Thyroid gland (tissue), 4 donors: ENCODE measurements at regions of chr7 and their contacts with region 1.

Region 1: GRCh38 chr7:7595451-7595850 is 28.8 kb downstream of the MIOS start:
- DNase-seq: no peak
- H3K4me3 ChIP-seq: no peak overlapping the region
- H3K27ac ChIP-seq: no peak overlapping the region
- H3K4me1 ChIP-seq: no peaks in the 10 kb centered on the region
- H3K27me3 ChIP-seq: no peaks in the 10 kb centered on the region
- CTCF ChIP-seq: peak in 4 of 6 experiments; percentile 28 to 84 (median 59)
- POLR2A ChIP-seq: no peak

Region 2: DNA sequence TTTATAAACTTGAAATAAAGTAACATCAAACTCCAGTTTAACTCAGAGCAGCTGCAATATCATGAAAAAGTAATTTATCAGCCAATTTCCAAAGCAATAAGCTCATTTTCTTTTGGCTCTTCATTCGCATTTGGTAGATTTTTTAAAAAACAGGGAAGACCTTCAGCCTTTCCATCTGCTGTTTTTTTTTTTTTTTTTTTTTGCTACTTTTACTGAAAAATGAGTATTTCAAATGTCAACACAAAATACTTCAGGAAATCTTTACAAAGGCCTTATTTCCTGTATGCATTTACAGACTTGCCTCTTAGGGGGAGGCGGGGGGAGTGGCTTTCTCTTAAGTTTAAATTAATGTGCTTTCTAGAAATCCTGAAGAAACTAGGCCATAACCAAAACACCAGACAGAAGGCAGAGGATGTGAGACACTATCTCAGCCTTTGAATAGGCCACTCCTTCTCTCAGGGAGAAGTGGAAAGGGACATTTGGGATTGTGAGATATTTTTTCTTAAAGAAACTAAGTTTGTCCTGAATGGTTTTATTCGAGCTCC is 151.6 kb before region 1 on chr7:
- intact Hi-C with region 1: no loop called
- DNase-seq: no peak
- H3K4me3 ChIP-seq: no peak overlapping the region
- H3K27ac ChIP-seq: no peak overlapping the region
- H3K4me1 ChIP-seq: no peaks in the 10 kb centered on the region
- H3K27me3 ChIP-seq: no peaks in the 10 kb centered on the region
- CTCF ChIP-seq: no peak
- POLR2A ChIP-seq: no peak

Region 3: DNA sequence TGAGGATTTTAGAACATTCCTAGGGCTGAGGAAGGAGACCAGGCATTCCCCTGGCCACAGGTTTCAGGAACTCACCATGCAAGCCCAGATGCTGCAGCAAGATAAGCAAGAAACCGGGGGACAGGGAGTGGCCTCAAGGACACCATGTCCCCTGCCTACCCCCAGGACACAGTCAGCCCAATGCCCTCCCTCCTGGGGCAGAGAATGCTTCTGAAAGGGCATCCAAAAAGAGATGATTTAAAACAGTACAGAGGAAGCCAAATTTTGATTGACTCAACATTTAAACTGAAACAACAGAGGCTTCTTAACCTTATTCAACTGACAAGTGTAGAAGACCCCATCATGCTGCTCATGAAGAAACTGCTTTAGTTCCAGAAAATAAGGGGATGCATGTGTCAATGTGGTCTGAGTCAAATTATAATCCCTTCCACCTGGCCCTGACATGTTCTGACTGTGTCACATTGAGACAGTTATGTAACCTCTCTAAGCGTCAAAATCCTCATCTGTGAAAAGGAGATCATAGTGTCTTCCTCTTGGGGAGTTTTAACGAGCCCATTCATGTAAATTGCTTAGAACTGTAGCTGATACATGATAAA is 606.5 kb after region 1 on chr7:
- intact Hi-C with region 1: loop called (anchors 5 kb)
- DNase-seq: no peak
- H3K4me3 ChIP-seq: no peak overlapping the region
- H3K27ac ChIP-seq: no peak overlapping the region
- H3K4me1 ChIP-seq: no peaks in the 10 kb centered on the region
- H3K27me3 ChIP-seq: no peaks in the 10 kb centered on the region
- CTCF ChIP-seq: no peak
- POLR2A ChIP-seq: no peak

Region 4: GRCh38 chr7:8217200-8218068 is 622.0 kb after region 1 on chr7:
- intact Hi-C with region 1: loop called (anchors 5 kb)
- DNase-seq: no peak
- H3K4me3 ChIP-seq: no peak overlapping the region
- H3K27ac ChIP-seq: no peak overlapping the region
- H3K4me1 ChIP-seq: peaks cover 15 to 26% of the 10 kb centered on the region in 2 donors
- H3K27me3 ChIP-seq: no peaks in the 10 kb centered on the region
- CTCF ChIP-seq: peak; percentile 49 to 86 (median 80)
- POLR2A ChIP-seq: no peak